ENCODE measurements at regions of chr12 and their contacts with region 1.

Region 1: GRCh38 chr12:49842519-49843352 is at the start of gene BCDIN3D:
- DNase-seq: peak in 1 of 2 experiments; percentile 83
- H3K4me3 ChIP-seq: peak within 1 kb of the TSS; percentile 63 to 90 (median 84)
- H3K27ac ChIP-seq: peak within 1 kb of the TSS; percentile 62
- H3K4me1 ChIP-seq: peaks cover 2 to 5% (median 4%) of the 10 kb centered on the region in 4 experiments; a peak in 4 of 7 replicates
- H3K27me3 ChIP-seq: no peaks in the 10 kb centered on the region
- CTCF ChIP-seq: no peak
- EP300 ChIP-seq: no peak
- POLR2A ChIP-seq: peak in 1 of 2 experiments; percentile 80; a peak in 2 of 3 replicates
- RAD21 ChIP-seq: no peak
- total RNA-seq, gene BCDIN3D: 2.4 and 2.5 TPM in 2 replicates

Region 2: DNA sequence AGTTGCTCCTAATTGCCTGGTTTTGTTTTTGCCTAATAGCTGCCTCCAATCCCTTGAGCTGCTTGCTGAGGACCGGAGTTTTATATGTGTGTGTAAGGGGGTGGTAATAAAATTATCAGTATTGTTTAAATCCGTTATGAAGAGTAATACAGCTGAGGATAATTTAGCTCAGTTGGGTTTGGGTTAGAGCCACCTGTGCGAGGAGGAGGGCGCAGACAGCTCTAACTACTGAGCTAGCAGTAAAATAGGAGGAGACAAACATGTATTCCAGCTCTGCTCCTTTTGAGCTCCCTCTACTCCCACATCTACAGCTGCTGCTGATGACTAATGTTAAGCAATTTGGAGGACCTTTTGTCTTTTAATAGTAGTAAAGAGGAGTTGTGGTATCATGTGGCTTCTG is 413.9 kb before region 1 on chr12:
- CTCF ChIA-PET with region 1: no interaction called
- POLR2A ChIA-PET with region 1: no interaction called
- DNase-seq: no peak
- H3K4me3 ChIP-seq: no peak overlapping the region
- H3K27ac ChIP-seq: no peak overlapping the region
- H3K4me1 ChIP-seq: peaks cover 0 to 2% (median 0%) of the 10 kb centered on the region in 4 experiments; a peak in 1 of 7 replicates
- H3K27me3 ChIP-seq: no peaks in the 10 kb centered on the region
- CTCF ChIP-seq: no peak
- EP300 ChIP-seq: no peak
- POLR2A ChIP-seq: no peak
- RAD21 ChIP-seq: no peak

Region 3: DNA sequence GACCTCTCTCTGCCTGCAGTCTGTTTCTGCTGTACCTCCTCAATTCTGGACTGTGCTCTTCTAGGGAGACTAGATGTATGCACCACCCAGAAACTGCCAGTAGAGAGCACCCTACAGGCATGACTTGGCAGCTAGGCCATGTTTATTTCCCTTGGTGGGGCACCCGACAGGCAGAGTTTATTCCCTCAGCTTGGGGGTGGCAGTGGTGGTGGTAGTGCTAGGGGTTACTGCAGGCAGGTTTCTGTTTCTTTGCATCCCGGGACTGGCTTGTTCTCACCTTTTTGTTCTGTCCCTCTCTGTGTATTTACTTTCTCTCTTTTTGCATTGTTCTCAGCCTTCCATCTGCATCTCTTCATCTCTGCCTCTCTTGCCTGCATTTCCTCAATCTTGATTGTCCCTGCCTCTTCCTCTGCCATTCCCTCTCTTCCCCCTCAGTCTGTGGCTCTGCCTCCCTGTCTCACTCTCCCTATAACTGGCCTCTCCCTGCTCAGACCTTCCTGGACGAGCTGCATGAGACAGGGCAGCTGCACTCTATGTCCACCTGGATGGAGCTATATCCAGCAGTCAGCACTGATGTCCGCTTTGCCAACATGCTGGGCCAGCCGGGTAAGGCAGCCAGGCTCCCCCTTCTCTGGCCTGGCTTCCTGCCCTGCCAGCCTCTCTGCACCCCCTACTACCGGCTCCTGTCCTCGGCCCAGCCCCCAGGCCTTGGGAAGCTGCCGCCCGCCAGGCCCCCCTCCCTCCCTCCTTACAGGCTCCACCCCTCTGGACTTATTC is 205.6 kb before region 1 on chr12:
- CTCF ChIA-PET with region 1: interaction called, 11 read pairs
- POLR2A ChIA-PET with region 1: no interaction called
- DNase-seq: no peak
- H3K4me3 ChIP-seq: no peak overlapping the region
- H3K27ac ChIP-seq: no peak overlapping the region; the same call in 1 of the 2 replicates
- H3K4me1 ChIP-seq: peaks cover 0 to 10% (median 5%) of the 10 kb centered on the region in 4 experiments; a peak in 5 of 7 replicates
- H3K27me3 ChIP-seq: no peaks in the 10 kb centered on the region
- CTCF ChIP-seq: peak; percentile 64 to 84 (median 79)
- EP300 ChIP-seq: no peak
- POLR2A ChIP-seq: peak; percentile 37 to 62; a peak in 2 of 3 replicates
- RAD21 ChIP-seq: peak; percentile 68 to 80

Region 4: DNA sequence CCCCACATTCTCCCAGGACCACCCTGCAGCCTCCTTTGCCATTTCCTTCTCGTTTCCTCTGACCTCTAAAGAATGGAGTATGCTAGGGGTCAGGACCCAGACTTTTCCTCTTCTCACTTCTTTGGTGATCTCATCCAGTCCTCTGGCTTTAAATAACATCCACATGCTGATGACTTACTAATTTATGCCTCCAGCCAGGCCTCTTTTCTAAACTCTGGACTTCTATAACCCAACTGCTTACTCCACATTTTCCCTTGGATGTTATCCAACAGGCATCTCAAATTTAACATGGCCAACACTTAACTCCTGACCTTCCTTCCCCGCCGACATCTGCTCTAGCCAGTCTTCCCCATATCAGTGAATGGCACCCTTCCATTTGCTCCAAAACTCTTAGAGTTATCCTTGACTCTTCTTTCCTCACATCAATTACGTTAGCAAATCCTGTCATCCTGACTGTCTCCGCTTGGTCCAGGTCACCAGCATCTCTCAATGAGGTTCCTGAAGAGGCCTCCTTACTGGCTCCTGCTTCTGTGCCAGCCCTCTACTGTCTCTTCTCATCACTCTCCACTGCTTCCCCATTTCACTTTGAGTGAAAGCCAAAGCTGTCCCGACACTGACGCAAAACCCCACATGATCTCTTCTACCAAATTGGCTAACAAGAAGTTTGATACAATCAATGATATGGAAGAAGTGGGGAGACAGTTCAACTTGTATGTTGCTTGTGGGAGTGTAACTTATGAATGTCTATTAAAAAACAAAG is 58.6 kb before region 1 on chr12:
- CTCF ChIA-PET with region 1: interaction called, 75 read pairs
- POLR2A ChIA-PET with region 1: interaction called, 3 read pairs
- DNase-seq: no peak
- H3K4me3 ChIP-seq: no peak overlapping the region
- H3K27ac ChIP-seq: no peak overlapping the region
- H3K4me1 ChIP-seq: no peaks in the 10 kb centered on the region
- H3K27me3 ChIP-seq: no peaks in the 10 kb centered on the region
- CTCF ChIP-seq: no peak
- EP300 ChIP-seq: no peak
- POLR2A ChIP-seq: no peak
- RAD21 ChIP-seq: no peak

Region 5: GRCh38 chr12:49809381-49809905 is 33.3 kb before region 1 on chr12:
- CTCF ChIA-PET with region 1: interaction called, 44 read pairs
- POLR2A ChIA-PET with region 1: interaction called, 4 read pairs
- DNase-seq: no peak
- H3K4me3 ChIP-seq: peak overlapping the region in 1 of 4 experiments; percentile 13; a peak in 3 of 8 replicates
- H3K27ac ChIP-seq: peak overlapping the region; percentile 62
- H3K4me1 ChIP-seq: peaks cover 16 to 35% (median 22%) of the 10 kb centered on the region in 4 experiments
- H3K27me3 ChIP-seq: no peaks in the 10 kb centered on the region
- CTCF ChIP-seq: no peak
- EP300 ChIP-seq: no peak
- POLR2A ChIP-seq: no peak
- RAD21 ChIP-seq: no peak

Region 6: DNA sequence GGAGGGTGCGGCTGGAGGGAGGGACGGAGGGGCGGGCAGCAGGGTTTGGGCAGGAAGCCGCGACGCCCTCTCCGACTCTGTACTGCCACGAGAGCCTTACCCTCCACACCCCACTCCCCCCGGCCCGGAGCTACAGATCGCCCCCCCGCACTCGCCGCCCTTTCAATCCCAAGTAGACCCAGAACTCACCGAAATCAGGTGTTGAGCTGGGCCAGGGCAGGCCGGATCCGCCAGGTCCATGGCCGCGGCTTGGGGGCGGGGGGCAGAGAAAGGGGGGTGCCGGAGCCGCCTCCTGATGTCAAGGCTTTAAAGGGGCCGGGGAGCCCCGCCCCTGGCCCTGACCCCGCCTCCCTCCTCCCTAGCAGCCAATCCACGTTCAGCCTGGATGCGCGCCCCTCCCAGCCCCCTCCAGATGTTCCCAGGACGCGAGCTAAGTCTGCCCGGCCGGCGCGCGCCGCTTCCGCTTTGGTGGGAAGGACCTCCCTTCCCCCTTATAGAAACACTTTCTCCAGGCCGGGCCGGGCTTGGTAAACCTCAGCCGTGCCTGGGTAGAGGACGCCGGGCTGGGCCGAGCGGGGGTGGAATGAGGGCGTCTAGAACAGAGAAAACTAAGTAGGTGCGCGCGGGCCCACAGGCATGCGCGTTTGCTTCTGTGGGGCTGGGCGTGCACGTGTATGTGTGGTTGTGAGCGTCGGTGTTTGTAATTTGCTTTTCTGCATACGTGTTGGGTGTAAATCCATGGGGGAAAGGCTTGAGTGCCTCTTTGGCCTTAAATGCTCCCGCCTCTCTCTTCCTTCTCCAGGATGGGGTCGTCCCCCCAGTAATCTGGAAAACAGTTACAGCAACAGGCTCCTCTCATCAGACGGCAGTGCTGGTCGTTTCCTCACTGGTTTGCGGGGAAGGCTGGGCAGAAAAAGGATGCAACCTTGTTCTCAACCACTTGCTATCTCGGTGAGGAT is 14.3 kb before region 1 on chr12 and contains the start of gene NCKAP5L:
- CTCF ChIA-PET with region 1: interaction called, 29 read pairs
- POLR2A ChIA-PET with region 1: interaction called, 35 read pairs
- DNase-seq: peak; percentile 90 to 96
- H3K4me3 ChIP-seq: peak within 1 kb of the TSS; percentile 77 to 90 (median 84)
- H3K27ac ChIP-seq: peak within 1 kb of the TSS; percentile 78
- H3K4me1 ChIP-seq: peaks cover 3 to 27% (median 18%) of the 10 kb centered on the region in 4 experiments
- H3K27me3 ChIP-seq: no peaks in the 10 kb centered on the region
- CTCF ChIP-seq: no peak
- EP300 ChIP-seq: no peak
- POLR2A ChIP-seq: peak; percentile 69 to 81
- RAD21 ChIP-seq: no peak
- total RNA-seq, gene NCKAP5L: 27.9 and 30.2 TPM in 2 replicates

Measured in H1 (cell line).